Heart left ventricle (tissue), 16 donors: ENCODE measurements at regions of chr20 and their contacts with region 1.

Region 1: DNA sequence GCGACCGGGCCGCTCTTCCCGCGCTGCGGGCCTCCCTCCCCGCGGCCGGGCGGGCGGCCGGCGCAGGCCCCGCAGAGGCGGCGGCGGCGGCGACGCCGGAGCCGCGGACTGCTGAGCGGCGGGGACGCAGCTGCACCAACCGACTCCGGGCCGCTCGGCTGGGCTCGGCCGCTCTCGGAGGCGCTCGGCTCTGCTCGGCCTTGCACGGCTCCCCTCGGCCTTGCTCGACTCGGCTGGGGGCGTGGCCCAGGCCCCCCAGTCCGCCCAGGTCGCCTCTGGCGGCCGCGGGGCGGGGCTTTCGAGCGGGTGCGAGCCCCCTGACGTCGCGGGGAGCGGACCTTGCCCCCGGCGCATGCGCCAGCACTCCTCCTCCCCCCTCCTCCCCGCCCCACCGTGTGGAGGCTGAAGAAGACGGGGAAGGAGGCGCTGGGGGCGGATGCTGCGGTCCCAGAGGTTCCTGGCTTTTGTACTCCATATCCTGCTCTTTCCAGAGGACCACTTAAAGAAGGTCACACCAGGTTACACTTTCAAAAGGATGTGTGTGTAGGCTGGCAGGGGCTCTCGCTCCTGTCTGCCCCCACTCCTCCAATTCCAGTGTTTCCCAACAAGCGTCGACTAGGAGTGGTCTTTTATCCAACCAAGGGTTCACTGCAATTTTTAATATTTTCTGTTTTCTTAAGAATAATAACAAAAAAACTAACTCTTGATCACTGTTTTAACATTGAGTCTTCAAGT is at the start of gene ZHX3:
- DNase-seq: peak; percentile 98 to 99 (median 98)
- ATAC-seq: peak; percentile 98 to 99 (median 98)
- H3K4me3 ChIP-seq: peak within 1 kb of the TSS; percentile 52 to 95 (median 86)
- H3K27ac ChIP-seq: peak within 1 kb of the TSS; percentile 67 to 94 (median 90)
- H3K4me1 ChIP-seq: peaks cover 7 to 46% (median 33%) of the 10 kb centered on the region in 12 donors
- H3K27me3 ChIP-seq: no peaks in the 10 kb centered on the region
- CTCF ChIP-seq: no peak
- POLR2A ChIP-seq: peak in 1 of 2 donors; percentile 60
- total RNA-seq, gene ZHX3: 26.3 to 43.9 (median 33.1) TPM

Region 2: GRCh38 chr20:41136680-41137613 is 180.8 kb before region 1 on chr20 and contains the start of gene PLCG1:
- intact Hi-C with region 1: loop called in 1 of 10 experiments (anchors 5 kb)
- DNase-seq: peak; percentile 91 to 95 (median 93)
- ATAC-seq: peak; percentile 76 to 89 (median 85)
- H3K4me3 ChIP-seq: peak within 1 kb of the TSS; percentile 56 to 100 (median 94)
- H3K27ac ChIP-seq: peak within 1 kb of the TSS; percentile 89 to 100 (median 98)
- H3K4me1 ChIP-seq: peaks cover 6 to 52% (median 43%) of the 10 kb centered on the region in 12 donors
- H3K27me3 ChIP-seq: peaks cover 0 to 4% (median 0%) of the 10 kb centered on the region in 9 donors
- CTCF ChIP-seq: peak in 1 of 12 donors; percentile 12
- POLR2A ChIP-seq: peak; percentile 38 to 85
- total RNA-seq, gene PLCG1: 32.5 to 72.2 (median 55.9) TPM

Region 3: GRCh38 chr20:41173161-41173721 is 144.5 kb before region 1 on chr20:
- intact Hi-C with region 1: loop called in 4 of 10 experiments (anchors 1 to 5 kb)
- DNase-seq: peak; percentile 85 to 92 (median 87)
- ATAC-seq: peak; percentile 66 to 83 (median 80)
- H3K4me3 ChIP-seq: no peak overlapping the region
- H3K27ac ChIP-seq: peak overlapping the region; percentile 68 to 93 (median 84)
- H3K4me1 ChIP-seq: peaks cover 14 to 71% (median 54%) of the 10 kb centered on the region in 12 donors
- H3K27me3 ChIP-seq: no peaks in the 10 kb centered on the region
- CTCF ChIP-seq: peak; percentile 96 to 99 (median 98)
- POLR2A ChIP-seq: no peak

Region 4: GRCh38 chr20:41232973-41233926 is 84.5 kb before region 1 on chr20:
- intact Hi-C with region 1: loop called in 2 of 10 experiments (anchors 1 to 5 kb)
- DNase-seq: no peak
- ATAC-seq: peak in 3 of 4 donors; percentile 35 to 62 (median 55)
- H3K4me3 ChIP-seq: peak overlapping the region in 3 of 12 donors; percentile 18 to 33 (median 31)
- H3K27ac ChIP-seq: peak overlapping the region; percentile 41 to 83 (median 76)
- H3K4me1 ChIP-seq: peaks cover 15 to 68% (median 50%) of the 10 kb centered on the region in 12 donors
- H3K27me3 ChIP-seq: no peaks in the 10 kb centered on the region
- CTCF ChIP-seq: no peak
- POLR2A ChIP-seq: no peak

Region 5: DNA sequence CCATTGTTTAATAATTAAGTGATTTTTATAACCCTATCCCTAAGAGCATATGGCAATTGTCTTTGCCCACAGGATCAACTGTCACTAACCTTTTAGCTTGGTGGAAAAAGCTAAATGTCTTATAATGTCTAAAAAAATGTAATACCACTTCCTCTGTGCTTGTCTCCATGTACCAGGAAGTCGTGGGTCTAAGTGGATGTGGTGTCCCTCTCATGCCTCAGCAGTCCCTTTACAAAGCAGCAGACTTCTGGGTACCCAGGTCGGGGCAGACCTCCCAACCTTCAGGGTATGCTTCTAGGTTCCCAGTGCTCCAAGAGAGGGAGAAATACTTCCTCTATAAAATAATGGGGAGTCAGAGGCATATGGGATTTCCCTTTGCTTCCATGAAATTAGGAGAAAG is 74.9 kb before region 1 on chr20:
- intact Hi-C with region 1: loop called in 8 of 10 experiments (anchors 2 to 5 kb)
- DNase-seq: no peak
- ATAC-seq: no peak
- H3K4me3 ChIP-seq: no peak overlapping the region
- H3K27ac ChIP-seq: no peak overlapping the region
- H3K4me1 ChIP-seq: peaks cover 10 to 59% (median 39%) of the 10 kb centered on the region in 12 donors
- H3K27me3 ChIP-seq: no peaks in the 10 kb centered on the region
- CTCF ChIP-seq: no peak
- POLR2A ChIP-seq: no peak

Region 6: DNA sequence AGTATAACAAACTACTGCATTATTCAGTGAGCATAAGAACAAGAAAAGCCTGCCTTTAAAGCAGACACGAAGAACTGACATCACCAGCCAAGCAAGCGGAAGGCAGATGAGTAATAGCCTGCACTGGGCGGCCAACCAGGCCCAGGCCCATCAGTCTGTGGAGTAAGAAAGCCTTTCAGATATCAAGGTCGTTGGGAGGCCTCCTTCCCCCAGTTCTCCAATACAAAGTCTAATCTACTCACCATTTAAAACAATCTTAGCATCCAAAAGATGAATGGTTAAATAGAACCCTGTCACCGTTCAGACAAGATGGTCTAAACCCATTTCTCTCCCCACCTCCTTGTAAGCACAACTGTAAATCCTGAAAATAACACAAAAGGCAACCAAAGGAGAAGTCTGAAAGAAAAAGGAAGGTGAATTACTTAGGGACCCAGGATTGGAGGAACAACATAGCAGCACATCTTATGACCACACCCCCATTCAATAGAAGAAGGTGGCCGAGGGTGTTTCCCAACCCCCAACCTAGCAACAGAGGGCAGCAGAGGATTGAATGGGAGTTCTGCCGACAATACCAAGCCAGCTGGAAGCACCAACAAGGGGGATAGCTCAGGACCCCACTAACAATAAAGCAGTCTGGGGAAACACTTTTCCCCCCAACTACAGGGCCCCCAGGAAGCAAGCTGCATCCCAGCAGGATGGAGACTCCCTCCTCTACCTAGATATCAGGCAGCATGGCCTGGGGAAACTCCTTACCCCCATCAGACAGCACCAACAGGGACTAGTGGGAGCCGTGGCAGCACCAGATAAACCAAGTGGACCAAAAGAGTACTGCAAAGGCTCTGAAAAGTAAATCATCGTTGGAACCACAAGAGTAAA is 68.1 kb before region 1 on chr20:
- intact Hi-C with region 1: loop called in 9 of 10 experiments (anchors 2 to 5 kb)
- DNase-seq: peak; percentile 45 to 82 (median 71)
- ATAC-seq: peak; percentile 80 to 90 (median 84)
- H3K4me3 ChIP-seq: no peak overlapping the region
- H3K27ac ChIP-seq: peak overlapping the region; percentile 79 to 95 (median 89)
- H3K4me1 ChIP-seq: peaks cover 32 to 65% (median 60%) of the 10 kb centered on the region in 12 donors
- H3K27me3 ChIP-seq: no peaks in the 10 kb centered on the region
- CTCF ChIP-seq: peak in 11 of 12 donors; percentile 10 to 49 (median 37)
- POLR2A ChIP-seq: no peak

Region 7: DNA sequence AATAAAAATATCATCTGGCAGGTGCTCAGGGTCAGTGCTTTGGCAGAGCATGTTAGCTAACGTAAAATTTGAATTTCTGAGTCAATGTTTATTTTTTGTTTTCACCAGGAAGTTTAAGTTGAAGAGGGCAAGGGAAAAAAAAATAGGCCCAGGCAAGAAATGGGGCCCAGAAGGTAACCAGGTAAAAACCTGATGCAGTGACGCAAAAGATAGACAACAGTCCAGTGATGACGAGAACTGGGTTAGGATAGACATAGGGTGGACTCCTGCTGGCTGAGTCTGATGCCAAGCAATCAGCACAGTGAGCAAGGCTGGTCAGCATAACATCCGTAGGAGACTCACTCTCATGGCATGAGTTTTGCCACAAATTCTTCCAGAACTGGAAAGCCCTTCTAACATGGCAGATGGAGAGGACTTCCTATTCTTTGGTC is 42.4 kb before region 1 on chr20:
- intact Hi-C with region 1: loop called in 3 of 10 experiments (anchors 5 kb)
- DNase-seq: no peak
- ATAC-seq: no peak
- H3K4me3 ChIP-seq: no peak overlapping the region
- H3K27ac ChIP-seq: peak overlapping the region in 9 of 12 donors; percentile 43 to 80 (median 66)
- H3K4me1 ChIP-seq: peaks cover 6 to 66% (median 34%) of the 10 kb centered on the region in 12 donors
- H3K27me3 ChIP-seq: no peaks in the 10 kb centered on the region
- CTCF ChIP-seq: no peak
- POLR2A ChIP-seq: no peak

Region 8: DNA sequence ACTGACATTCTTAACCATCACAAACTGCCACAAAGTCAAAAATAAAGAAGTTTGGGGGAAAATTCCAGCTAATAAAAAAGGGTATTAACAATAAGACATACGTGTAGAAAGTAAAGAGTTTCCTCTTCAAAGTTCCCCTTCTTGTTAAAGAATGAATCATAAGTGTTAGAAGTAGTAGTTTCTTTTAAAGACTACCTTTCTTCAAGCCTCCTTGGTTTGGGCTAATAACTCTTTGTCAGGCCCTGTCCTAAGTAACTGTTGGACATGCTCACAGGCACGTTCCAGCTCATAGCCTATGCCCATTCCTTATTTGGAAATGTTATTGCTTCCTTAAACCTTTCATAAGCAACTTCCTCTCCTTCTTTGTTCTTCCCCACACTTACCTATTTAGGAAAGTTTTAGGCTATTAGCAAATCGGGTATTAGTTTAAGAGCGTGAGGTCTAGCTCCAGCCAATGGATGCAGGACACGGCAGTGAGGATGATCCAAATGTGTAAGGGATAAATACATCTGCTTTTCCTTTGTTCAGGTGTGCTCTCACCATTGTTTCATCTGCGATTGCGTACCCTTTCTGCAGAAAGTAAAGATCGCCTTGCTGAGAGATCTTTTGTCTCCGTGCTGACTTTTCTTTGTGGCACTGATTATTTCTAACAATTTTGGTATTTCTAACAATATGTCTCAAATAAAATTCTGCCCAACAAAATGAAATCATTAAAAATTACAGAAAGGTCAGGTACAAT is 235.6 kb after region 1 on chr20:
- intact Hi-C with region 1: no loop called
- DNase-seq: no peak
- ATAC-seq: no peak
- H3K4me3 ChIP-seq: no peak overlapping the region
- H3K27ac ChIP-seq: no peak overlapping the region
- H3K4me1 ChIP-seq: peaks cover 0 to 25% (median 0%) of the 10 kb centered on the region in 12 donors
- H3K27me3 ChIP-seq: no peaks in the 10 kb centered on the region
- CTCF ChIP-seq: no peak
- POLR2A ChIP-seq: no peak